RWPE1 (cell line): ENCODE measurements at regions of chr15 and their contacts with region 1.

Region 1: GRCh38 chr15:92077353-92078085 is 224.0 kb downstream of the SLCO3A1 start:
- DNase-seq: peak; percentile 73
- H3K27ac ChIP-seq: no peak overlapping the region
- CTCF ChIP-seq: peak; percentile 87

Region 2: GRCh38 chr15:91302588-91303439 is 774.7 kb before region 1 on chr15:
- CTCF ChIA-PET with region 1: interaction called, 11 read pairs
- POLR2A ChIA-PET with region 1: no interaction called
- DNase-seq: peak; percentile 78
- H3K27ac ChIP-seq: no peak overlapping the region
- CTCF ChIP-seq: peak; percentile 87